GM12878 (cell line): ENCODE measurements at regions of chr9 and their contacts with region 1.

Region 1: DNA sequence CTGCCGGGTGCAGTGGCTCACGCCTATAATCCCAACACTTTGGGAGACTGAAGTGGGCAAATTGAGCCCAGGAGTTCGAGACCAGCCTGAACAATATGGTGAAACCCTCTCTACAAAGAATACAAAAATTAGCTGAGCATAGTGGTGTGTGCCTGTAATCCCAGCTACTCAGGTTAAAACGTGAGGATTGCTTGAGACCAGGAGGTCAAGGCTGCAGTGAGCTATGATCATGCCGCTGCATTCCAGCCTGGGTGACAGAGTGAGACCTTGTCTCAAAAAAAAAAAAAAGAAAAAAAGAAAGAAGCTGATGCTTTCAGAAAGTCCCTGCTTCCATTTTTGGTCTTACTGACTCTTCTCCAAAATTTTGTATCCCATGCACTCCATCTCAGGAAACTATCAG is 31.3 kb downstream of the SNAPC3 start:
- DNase-seq: no peak
- ATAC-seq: no peak
- H3K4me3 ChIP-seq: no peak overlapping the region
- H3K27ac ChIP-seq: no peak overlapping the region
- H3K4me1 ChIP-seq: no peaks in the 10 kb centered on the region
- H3K27me3 ChIP-seq: no peaks in the 10 kb centered on the region
- CTCF ChIP-seq: no peak
- EP300 ChIP-seq: no peak
- POLR2A ChIP-seq: no peak
- RAD21 ChIP-seq: no peak

Region 2: GRCh38 chr9:15192856-15193255 is 261.1 kb before region 1 on chr9:
- CTCF ChIA-PET with region 1: no interaction called
- POLR2A ChIA-PET with region 1: no interaction called
- RAD21 ChIA-PET with region 1: no interaction called
- SMC1A ChIA-PET with region 1: no interaction called
- in situ Hi-C with region 1: no loop called
- intact Hi-C with region 1: no loop called
- DNase-seq: no peak
- ATAC-seq: no peak
- H3K4me3 ChIP-seq: no peak overlapping the region
- H3K27ac ChIP-seq: no peak overlapping the region
- H3K4me1 ChIP-seq: no peaks in the 10 kb centered on the region
- H3K27me3 ChIP-seq: no peaks in the 10 kb centered on the region
- CTCF ChIP-seq: no peak
- EP300 ChIP-seq: no peak
- POLR2A ChIP-seq: no peak
- RAD21 ChIP-seq: no peak

Region 3: GRCh38 chr9:15317836-15318235 is 136.1 kb before region 1 on chr9:
- CTCF ChIA-PET with region 1: no interaction called
- POLR2A ChIA-PET with region 1: interaction called, 12 read pairs
- RAD21 ChIA-PET with region 1: no interaction called
- SMC1A ChIA-PET with region 1: no interaction called
- in situ Hi-C with region 1: no loop called
- intact Hi-C with region 1: no loop called
- DNase-seq: no peak
- ATAC-seq: no peak
- H3K4me3 ChIP-seq: no peak overlapping the region
- H3K27ac ChIP-seq: no peak overlapping the region
- H3K4me1 ChIP-seq: no peaks in the 10 kb centered on the region
- H3K27me3 ChIP-seq: no peaks in the 10 kb centered on the region
- CTCF ChIP-seq: no peak
- EP300 ChIP-seq: no peak
- POLR2A ChIP-seq: no peak
- RAD21 ChIP-seq: no peak